ENCODE measurements at regions of chr1 and their contacts with region 1.

Region 1: DNA sequence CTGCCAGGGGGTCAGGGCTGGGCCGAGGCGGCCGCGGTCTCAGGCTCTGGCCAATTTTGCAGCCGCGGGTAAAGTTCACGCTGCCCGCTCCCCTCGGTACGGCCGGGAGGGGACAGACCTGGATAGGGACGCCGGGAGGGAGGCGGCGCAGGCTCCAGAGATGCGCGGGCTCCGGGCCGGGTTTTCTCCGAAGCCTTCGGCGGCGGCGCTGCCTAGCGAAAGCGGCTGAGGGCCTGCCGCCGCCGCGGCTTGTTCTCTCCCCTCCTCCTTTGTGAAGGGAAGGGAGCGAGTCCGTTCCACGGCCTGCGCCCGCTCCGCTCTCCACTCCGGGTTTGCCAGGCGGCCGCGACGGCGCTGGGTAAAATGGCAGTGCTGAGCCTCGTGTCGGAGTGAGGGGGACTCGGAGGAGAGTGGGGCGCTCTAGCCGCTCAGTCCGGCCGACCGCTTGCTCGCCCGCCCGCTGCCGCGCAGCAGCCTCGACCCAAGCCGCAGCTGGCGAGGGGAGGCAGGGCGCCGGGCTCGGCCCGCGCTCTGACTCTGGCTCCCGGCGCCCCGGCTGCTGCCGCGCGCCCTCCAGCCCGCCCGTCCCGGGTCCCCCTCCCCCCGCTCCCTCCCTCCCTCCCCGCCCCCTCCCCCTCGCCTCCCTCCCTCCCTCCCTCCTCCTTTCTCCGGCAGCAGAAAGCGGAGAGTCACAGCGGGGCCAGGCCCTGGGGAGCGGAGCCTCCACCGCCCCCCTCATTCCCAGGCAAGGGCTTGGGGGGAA is at the start of gene ARID1A:
- DNase-seq: peak; percentile 96 to 98 (median 97)
- H3K4me3 ChIP-seq: peak within 1 kb of the TSS; percentile 87 to 96
- H3K4me3 Mint-ChIP-seq: peak within 1 kb of the TSS; percentile 88 to 98 (median 94)
- H3K27ac ChIP-seq: peak within 1 kb of the TSS; percentile 76
- H3K27ac Mint-ChIP-seq: peak within 1 kb of the TSS; percentile 94 to 98 (median 96)
- H3K4me1 ChIP-seq: peaks cover 52% of the 10 kb centered on the region
- H3K4me1 Mint-ChIP-seq: peaks cover 19 to 35% (median 29%) of the 10 kb centered on the region in 4 donors
- H3K27me3 ChIP-seq: no peaks in the 10 kb centered on the region
- H3K27me3 Mint-ChIP-seq: no peaks in the 10 kb centered on the region
- total RNA-seq, gene ARID1A: 112 to 127 TPM

Region 2: DNA sequence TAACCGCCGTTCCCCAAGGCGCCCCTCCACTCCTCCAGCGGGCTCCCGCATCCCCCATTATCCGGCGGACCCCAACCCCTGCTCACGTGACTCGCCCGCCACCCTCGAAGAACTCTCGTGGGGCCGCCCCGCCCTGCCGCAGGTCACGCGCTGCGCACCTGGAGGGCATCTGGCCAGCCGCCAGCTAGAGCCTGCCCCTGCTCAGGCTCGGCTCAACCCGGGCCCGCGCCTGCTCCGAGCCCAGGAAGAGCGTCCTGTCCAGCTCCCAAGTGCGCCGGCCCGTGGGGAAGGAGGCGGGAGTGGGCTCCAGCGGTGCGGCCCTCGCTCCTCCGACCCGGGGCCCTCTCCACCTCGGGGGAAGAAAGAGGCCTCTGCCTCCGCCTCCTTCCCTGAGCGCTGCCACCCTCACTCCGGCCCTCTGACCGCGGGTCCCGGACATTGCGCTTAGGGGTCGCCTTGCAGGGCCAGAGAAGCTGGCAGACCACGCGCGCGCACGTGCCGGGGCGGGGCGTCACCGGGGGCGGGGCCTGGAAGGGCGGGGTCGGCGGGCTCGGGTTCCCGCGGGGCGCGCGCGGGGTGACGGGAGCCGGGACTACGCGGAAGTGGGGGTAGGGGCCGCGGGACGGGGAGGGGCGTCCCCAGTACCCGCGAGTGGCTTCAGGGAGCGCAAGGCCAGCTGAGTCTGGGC is 194.9 kb before region 1 on chr1:
- CTCF ChIA-PET with region 1: interaction called, 9 read pairs
- POLR2A ChIA-PET with region 1: interaction called, 12 read pairs
- intact Hi-C with region 1: loop called (anchors 10 kb)
- DNase-seq: peak; percentile 85 to 87 (median 86)
- H3K4me3 ChIP-seq: peak overlapping the region; percentile 58 to 95
- H3K4me3 Mint-ChIP-seq: peak overlapping the region; percentile 83 to 90 (median 87)
- H3K27ac ChIP-seq: peak overlapping the region; percentile 87
- H3K27ac Mint-ChIP-seq: peak overlapping the region; percentile 85 to 95 (median 94)
- H3K4me1 ChIP-seq: peaks cover 16% of the 10 kb centered on the region
- H3K4me1 Mint-ChIP-seq: peaks cover 2 to 32% (median 12%) of the 10 kb centered on the region in 4 donors
- H3K27me3 ChIP-seq: no peaks in the 10 kb centered on the region
- H3K27me3 Mint-ChIP-seq: no peaks in the 10 kb centered on the region

Region 3: DNA sequence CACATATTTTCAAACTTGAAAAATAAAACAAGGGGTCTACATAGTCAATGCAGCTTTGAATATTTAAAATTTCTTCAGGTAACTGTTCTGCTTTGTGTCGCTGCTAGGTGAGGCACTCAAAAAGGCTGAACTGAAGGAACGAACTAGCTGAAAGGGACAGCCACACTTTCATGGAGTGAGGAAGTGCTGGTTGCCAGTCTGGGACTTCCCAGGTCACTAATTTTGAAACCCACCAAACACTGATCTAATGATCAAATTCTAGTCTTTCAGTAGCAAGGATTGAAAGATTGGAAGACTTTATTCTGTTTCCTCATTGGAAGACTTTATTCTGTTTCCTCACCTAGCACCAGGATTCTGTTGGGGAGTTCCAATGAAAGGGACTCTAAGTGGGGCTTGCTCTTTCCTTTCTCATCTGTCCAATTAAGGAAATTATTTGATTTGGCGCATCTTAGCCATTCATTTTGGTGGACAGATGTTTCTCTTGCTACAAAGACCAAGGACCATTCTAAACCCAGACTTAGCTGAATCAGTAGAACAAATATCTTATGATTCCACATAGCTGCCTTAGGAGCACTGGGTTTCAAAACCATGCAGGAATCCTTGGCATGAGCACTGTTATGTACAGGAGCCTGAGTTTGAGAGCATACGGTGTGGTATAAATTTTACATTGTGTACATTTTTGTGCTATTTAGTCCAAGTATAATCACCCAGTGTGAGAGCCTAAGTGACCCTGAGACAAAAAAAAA is 10.6 kb before region 1 on chr1:
- CTCF ChIA-PET with region 1: interaction called, 13 read pairs
- POLR2A ChIA-PET with region 1: interaction called, 45 read pairs
- intact Hi-C with region 1: no loop called
- DNase-seq: no peak
- H3K4me3 ChIP-seq: no peak overlapping the region
- H3K4me3 Mint-ChIP-seq: no peak overlapping the region
- H3K27ac ChIP-seq: no peak overlapping the region
- H3K27ac Mint-ChIP-seq: no peak overlapping the region
- H3K4me1 ChIP-seq: peaks cover 14% of the 10 kb centered on the region
- H3K4me1 Mint-ChIP-seq: peaks cover 6 to 16% (median 10%) of the 10 kb centered on the region in 4 donors
- H3K27me3 ChIP-seq: no peaks in the 10 kb centered on the region
- H3K27me3 Mint-ChIP-seq: no peaks in the 10 kb centered on the region

Region 4: DNA sequence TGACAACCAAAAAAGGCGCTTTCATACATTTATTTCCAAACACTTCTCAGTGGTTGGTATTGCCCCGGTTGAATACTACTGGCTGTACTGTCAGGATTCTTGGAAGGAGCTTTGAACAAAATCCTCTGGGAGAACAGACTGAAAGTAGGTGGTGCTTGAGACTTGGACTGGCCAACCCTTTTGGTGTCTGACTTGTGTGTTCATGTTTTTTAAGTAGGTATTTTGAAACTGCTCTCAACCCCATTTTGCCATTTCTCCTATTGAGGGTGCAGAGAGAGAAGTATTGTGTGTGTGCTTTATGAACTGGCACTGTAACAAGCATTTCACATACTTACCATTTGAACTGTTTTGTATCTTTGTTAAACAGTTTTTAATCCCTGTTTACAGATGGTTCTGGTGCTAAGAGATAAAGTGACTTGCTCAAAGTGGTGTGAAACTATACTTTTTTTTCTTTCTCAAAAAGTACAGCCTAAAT is 21.5 kb after region 1 on chr1:
- CTCF ChIA-PET with region 1: interaction called, 4 read pairs
- POLR2A ChIA-PET with region 1: interaction called, 46 read pairs
- intact Hi-C with region 1: no loop called
- DNase-seq: no peak
- H3K4me3 ChIP-seq: no peak overlapping the region
- H3K4me3 Mint-ChIP-seq: peak overlapping the region in 5 of 8 donors; percentile 13 to 56 (median 22)
- H3K27ac ChIP-seq: no peak overlapping the region
- H3K27ac Mint-ChIP-seq: peak overlapping the region in 6 of 7 donors; percentile 0 to 87 (median 56)
- H3K4me1 ChIP-seq: peaks cover 96% of the 10 kb centered on the region
- H3K4me1 Mint-ChIP-seq: peaks cover 68 to 93% (median 82%) of the 10 kb centered on the region in 4 donors
- H3K27me3 ChIP-seq: no peaks in the 10 kb centered on the region
- H3K27me3 Mint-ChIP-seq: no peaks in the 10 kb centered on the region

Region 5: GRCh38 chr1:26730695-26731094 is 35.2 kb after region 1 on chr1:
- CTCF ChIA-PET with region 1: interaction called, 9 read pairs
- POLR2A ChIA-PET with region 1: interaction called, 46 read pairs
- intact Hi-C with region 1: no loop called
- DNase-seq: no peak
- H3K4me3 ChIP-seq: no peak overlapping the region
- H3K4me3 Mint-ChIP-seq: no peak overlapping the region
- H3K27ac ChIP-seq: no peak overlapping the region
- H3K27ac Mint-ChIP-seq: peak overlapping the region; percentile 23 to 94 (median 56)
- H3K4me1 ChIP-seq: peaks cover 65% of the 10 kb centered on the region
- H3K4me1 Mint-ChIP-seq: peaks cover 57 to 89% (median 75%) of the 10 kb centered on the region in 4 donors
- H3K27me3 ChIP-seq: no peaks in the 10 kb centered on the region
- H3K27me3 Mint-ChIP-seq: no peaks in the 10 kb centered on the region

Region 6: DNA sequence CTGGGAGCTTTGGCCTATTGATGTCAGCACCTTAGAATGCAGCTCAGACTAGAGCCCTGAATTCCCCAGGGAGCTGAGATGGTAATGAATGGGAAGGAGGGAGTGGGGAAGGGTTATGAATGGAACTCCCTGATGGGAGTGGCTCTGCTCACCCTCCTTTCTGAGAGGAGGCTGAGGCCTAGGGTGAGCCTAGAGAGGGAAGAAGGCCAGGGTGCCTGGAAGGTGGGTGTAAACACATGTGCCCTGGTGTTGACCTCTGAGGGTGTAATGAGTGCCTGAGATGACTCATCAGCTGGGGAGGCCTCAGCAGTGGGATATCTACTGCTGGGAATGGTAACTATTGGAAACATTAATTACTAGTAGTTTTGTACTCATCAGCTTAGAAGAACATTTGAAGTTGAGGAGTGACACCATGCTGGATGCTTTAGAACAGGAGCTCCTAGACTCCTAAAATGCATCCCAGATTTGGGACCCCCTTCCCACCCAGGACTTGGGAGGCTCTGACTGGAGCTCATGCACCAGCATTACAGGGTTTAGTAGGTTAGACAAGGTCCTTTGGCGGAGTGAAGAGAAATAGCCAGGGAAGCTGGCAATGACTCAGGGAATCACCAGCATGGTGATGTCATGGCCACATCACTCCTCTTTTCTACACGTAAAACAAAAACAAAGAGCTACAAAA is 76.2 kb after region 1 on chr1:
- CTCF ChIA-PET with region 1: interaction called, 4 read pairs
- POLR2A ChIA-PET with region 1: interaction called, 10 read pairs
- intact Hi-C with region 1: no loop called
- DNase-seq: no peak
- H3K4me3 ChIP-seq: no peak overlapping the region
- H3K4me3 Mint-ChIP-seq: no peak overlapping the region
- H3K27ac ChIP-seq: peak overlapping the region; percentile 10
- H3K27ac Mint-ChIP-seq: peak overlapping the region; percentile 52 to 86 (median 61)
- H3K4me1 ChIP-seq: peaks cover 3% of the 10 kb centered on the region
- H3K4me1 Mint-ChIP-seq: peaks cover 0 to 7% (median 3%) of the 10 kb centered on the region in 4 donors
- H3K27me3 ChIP-seq: no peaks in the 10 kb centered on the region
- H3K27me3 Mint-ChIP-seq: no peaks in the 10 kb centered on the region

Measured in CD4-positive, alpha-beta memory T cell (primary cell).